Head of caudate nucleus (tissue), 42 donors: ENCODE measurements at regions of chr19 and their contacts with region 1.

Region 1: GRCh38 chr19:29467824-29468401 is 57.9 kb upstream of the VSTM2B start:
- DNase-seq: peak in 40 of 42 donors; percentile 27 to 87 (median 68)

Region 2: GRCh38 chr19:29446361-29446760 is 21.6 kb before region 1 on chr19:
- intact Hi-C with region 1: no loop called
- DNase-seq: peak in 4 of 42 donors; percentile 2 to 35 (median 19)

Region 3: GRCh38 chr19:29528350-29528945 is 60.5 kb after region 1 on chr19:
- intact Hi-C with region 1: loop called (anchors 5 kb)
- DNase-seq: peak; percentile 65 to 93 (median 85)